Pancreas (tissue), 10 donors: ENCODE measurements at regions of chr5 and their contacts with region 1.

Region 1: GRCh38 chr5:171207256-171207847 is 101.7 kb upstream of the TLX3 start:
- DNase-seq: peak in 1 of 6 donors; percentile 9
- ATAC-seq: peak in 2 of 4 donors; percentile 48 to 49
- H3K4me3 ChIP-seq: no peak overlapping the region
- H3K27ac ChIP-seq: no peak overlapping the region
- H3K4me1 ChIP-seq: no peaks in the 10 kb centered on the region
- H3K27me3 ChIP-seq: no peaks in the 10 kb centered on the region
- CTCF ChIP-seq: peak in 1 of 4 donors; percentile 8

Region 2: DNA sequence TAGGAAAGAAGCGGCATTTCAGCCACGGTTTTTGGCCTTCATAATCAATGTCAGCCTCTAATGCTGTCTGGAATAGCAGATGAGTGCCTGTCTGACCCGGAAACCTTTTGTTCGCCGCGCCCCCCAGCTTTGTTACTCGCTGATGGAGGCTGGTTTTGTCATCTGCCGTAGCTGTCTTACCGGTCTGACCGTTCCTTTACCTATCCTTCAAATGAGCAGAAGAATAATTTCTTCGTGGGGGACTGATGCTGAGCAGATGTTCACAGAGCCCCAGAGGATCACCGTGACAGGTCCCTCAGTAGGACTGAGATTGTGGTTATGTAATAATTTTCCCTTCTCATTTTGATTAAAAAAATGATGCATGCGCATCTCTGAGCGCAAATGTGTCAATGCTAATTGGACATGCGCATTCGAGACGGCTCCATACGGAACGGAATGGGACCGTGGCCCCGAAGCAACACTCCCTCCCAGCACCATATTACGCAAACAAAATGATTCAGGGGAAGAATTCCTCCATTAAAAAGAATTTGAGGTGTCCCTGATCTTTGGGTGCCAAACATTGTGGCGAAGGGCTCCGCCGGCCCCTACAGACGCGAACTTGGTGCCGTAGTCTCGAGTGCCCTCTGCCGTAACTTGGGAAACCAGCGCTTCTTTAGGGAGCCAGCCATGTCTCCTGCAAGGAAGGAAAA is 129.3 kb after region 1 on chr5:
- intact Hi-C with region 1: loop called in 1 of 3 experiments (anchors 10 kb)
- DNase-seq: peak in 4 of 6 donors; percentile 17 to 65 (median 44)
- ATAC-seq: peak; percentile 76 to 96 (median 87)
- H3K4me3 ChIP-seq: peak overlapping the region in 2 of 4 donors; percentile 21 to 34
- H3K27ac ChIP-seq: no peak overlapping the region
- H3K4me1 ChIP-seq: no peaks in the 10 kb centered on the region
- H3K27me3 ChIP-seq: peaks cover 0 to 16% (median 4%) of the 10 kb centered on the region in 4 donors
- CTCF ChIP-seq: peak in 3 of 4 donors; percentile 28 to 34 (median 29)

Region 3: GRCh38 chr5:171882118-171882517 is 674.8 kb after region 1 on chr5:
- intact Hi-C with region 1: no loop called
- DNase-seq: no peak
- ATAC-seq: no peak
- H3K4me3 ChIP-seq: no peak overlapping the region
- H3K27ac ChIP-seq: no peak overlapping the region
- H3K4me1 ChIP-seq: no peaks in the 10 kb centered on the region
- H3K27me3 ChIP-seq: no peaks in the 10 kb centered on the region
- CTCF ChIP-seq: no peak